ENCODE measurements at regions of chr12 and their contacts with region 1.

Region 1: DNA sequence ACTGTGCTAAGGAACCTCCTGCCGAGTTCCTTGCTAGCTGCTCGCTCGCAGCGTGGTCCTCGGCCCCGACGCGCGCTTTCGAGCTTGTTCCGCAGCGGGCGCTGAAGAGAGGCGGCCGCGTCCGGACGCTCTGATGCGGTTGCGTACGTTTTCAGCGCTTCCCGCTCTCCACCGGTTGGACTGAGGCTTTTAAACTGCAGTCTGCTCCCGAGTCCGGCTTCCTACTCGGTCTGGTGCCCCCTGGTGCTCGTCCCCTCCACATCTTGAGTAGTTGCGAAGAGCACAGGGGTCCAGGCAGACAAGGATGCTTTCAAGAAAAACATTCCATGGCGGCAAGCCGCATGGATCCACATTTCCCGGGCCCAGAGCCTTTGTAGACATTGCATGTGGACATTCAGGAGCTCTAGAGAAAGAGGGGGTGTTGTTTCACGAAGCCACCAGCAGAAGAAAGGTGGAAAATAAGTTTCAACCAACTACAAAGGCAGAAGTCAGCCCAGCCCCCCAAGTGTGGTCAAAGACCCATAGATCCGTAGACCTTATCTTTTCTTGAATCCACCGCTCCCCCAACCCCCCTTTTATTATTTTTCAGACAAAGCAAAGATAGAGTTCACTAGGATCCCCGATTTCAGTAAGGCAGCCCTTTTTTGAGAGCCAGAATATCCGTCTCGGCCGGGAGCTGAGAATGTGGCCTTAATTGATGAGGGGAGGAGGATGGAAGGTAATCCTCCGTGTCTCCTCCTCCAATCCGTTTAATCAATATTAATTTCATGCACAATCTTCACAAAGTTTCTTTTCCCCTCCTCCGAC is 984 bp upstream of the WNK1 start:
- DNase-seq: peak; percentile 91
- ATAC-seq: peak; percentile 71
- H3K4me3 ChIP-seq: peak overlapping the region; percentile 65 to 71 (median 67)
- H3K27ac ChIP-seq: peak overlapping the region; percentile 64
- H3K4me1 ChIP-seq: peaks cover 17% of the 10 kb centered on the region
- H3K27me3 ChIP-seq: no peaks in the 10 kb centered on the region; a peak in 1 of 5 replicates
- CTCF ChIP-seq: peak; percentile 97
- EP300 ChIP-seq: peak in 1 of 2 experiments; percentile 34; a peak in 2 of 4 replicates
- POLR2A ChIP-seq: peak; percentile 61 to 68
- RAD21 ChIP-seq: peak; percentile 94

Region 2: GRCh38 chr12:583234-583869 is 168.0 kb before region 1 on chr12:
- CTCF ChIA-PET with region 1: no interaction called
- POLR2A ChIA-PET with region 1: interaction called, 42 read pairs
- in situ Hi-C with region 1: no loop called
- intact Hi-C with region 1: no loop called
- DNase-seq: peak; percentile 84
- ATAC-seq: peak; percentile 84
- H3K4me3 ChIP-seq: peak overlapping the region in 1 of 3 experiments; percentile 39; a peak in 1 of 6 replicates
- H3K27ac ChIP-seq: peak overlapping the region; percentile 88
- H3K4me1 ChIP-seq: peaks cover 97% of the 10 kb centered on the region
- H3K27me3 ChIP-seq: no peaks in the 10 kb centered on the region
- CTCF ChIP-seq: peak; percentile 35; the same call in 1 of the 2 replicates
- EP300 ChIP-seq: peak in 1 of 2 experiments; percentile 82; a peak in 2 of 4 replicates
- POLR2A ChIP-seq: peak in 1 of 2 experiments; percentile 38; a peak in 1 of 4 replicates
- RAD21 ChIP-seq: peak; percentile 54; the same call in 1 of the 2 replicates

Measured in HepG2 (cell line).